ENCODE measurements at regions of chr16 and their contacts with region 1.

Region 1: GRCh38 chr16:1308977-1309885 is at the start of gene UBE2I:
- DNase-seq: peak; percentile 96 to 99 (median 98)
- H3K4me3 ChIP-seq: peak within 1 kb of the TSS; percentile 60 to 95 (median 86)
- H3K27ac ChIP-seq: peak within 1 kb of the TSS; percentile 94 to 100 (median 99)
- H3K27me3 ChIP-seq: no peaks in the 10 kb centered on the region
- CTCF ChIP-seq: peak in 5 of 56 donors; percentile 6 to 29 (median 18)
- total RNA-seq, gene UBE2I: 66.6 to 108 (median 83.6) TPM

Region 2: DNA sequence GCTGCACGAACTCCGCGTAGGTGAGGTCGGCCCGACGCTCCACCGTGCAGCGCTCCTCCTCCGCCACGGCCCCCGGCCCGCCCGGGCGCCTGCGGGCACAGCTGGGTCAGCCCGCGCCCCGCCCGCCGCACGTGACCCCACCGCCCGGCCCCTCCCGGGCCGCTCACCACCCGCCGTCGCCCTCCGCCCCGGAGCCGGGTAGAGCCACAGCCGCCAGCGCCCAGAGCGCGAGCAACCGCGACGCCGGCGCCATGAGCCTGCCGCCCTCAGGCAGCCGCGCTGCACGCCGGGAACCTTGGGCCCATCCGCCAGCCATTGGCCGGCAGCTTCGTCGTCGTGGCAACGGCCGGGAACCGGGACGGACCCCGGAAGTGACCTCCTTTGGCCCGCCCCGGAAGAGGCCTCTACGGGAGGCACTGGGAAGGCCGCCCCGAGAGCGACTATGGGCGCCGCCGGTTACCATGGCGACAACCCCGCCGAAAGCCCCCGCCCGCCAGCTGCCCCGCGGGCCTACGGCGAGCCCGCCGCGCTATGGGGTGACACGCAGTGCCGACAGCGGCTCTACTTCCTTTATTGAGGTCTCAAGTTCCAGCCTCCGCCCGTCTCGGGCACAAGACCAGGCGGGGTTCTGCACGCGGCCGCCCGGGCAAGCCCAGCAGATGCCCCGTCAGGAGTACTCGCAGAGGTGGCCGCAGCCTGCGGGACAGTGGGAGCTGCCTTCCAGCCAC is 625.0 kb before region 1 on chr16 and contains the start of gene JMJD8:
- intact Hi-C with region 1: loop called in 1 of 2 experiments (anchors 10 kb)
- DNase-seq: peak; percentile 93 to 99 (median 96)
- H3K4me3 ChIP-seq: peak within 1 kb of the TSS; percentile 10 to 93 (median 70)
- H3K27ac ChIP-seq: peak within 1 kb of the TSS in 53 of 59 donors; percentile 27 to 89 (median 77)
- H3K27me3 ChIP-seq: no peaks in the 10 kb centered on the region
- CTCF ChIP-seq: peak in 13 of 56 donors; percentile 10 to 43 (median 21)
- total RNA-seq, gene JMJD8: 19.0 to 50.5 (median 30.3) TPM

Region 3: GRCh38 chr16:1194665-1195392 is 114.4 kb before region 1 on chr16:
- intact Hi-C with region 1: no loop called
- DNase-seq: peak in 1 of 10 donors; percentile 22
- H3K4me3 ChIP-seq: peak overlapping the region in 1 of 59 donors; percentile 21
- H3K27ac ChIP-seq: no peak overlapping the region
- H3K27me3 ChIP-seq: no peaks in the 10 kb centered on the region
- CTCF ChIP-seq: peak; percentile 47 to 92 (median 79)

Region 4: GRCh38 chr16:1342526-1343427 is 33.5 kb after region 1 on chr16:
- intact Hi-C with region 1: loop called in 1 of 2 experiments (anchors 5 kb)
- DNase-seq: peak; percentile 77 to 94 (median 88)
- H3K4me3 ChIP-seq: peak overlapping the region in 52 of 59 donors; percentile 6 to 58 (median 36)
- H3K27ac ChIP-seq: peak overlapping the region in 2 of 59 donors; percentile 2 to 17
- H3K27me3 ChIP-seq: peaks cover 0 to 12% (median 0%) of the 10 kb centered on the region in 45 donors
- CTCF ChIP-seq: no peak

Region 5: DNA sequence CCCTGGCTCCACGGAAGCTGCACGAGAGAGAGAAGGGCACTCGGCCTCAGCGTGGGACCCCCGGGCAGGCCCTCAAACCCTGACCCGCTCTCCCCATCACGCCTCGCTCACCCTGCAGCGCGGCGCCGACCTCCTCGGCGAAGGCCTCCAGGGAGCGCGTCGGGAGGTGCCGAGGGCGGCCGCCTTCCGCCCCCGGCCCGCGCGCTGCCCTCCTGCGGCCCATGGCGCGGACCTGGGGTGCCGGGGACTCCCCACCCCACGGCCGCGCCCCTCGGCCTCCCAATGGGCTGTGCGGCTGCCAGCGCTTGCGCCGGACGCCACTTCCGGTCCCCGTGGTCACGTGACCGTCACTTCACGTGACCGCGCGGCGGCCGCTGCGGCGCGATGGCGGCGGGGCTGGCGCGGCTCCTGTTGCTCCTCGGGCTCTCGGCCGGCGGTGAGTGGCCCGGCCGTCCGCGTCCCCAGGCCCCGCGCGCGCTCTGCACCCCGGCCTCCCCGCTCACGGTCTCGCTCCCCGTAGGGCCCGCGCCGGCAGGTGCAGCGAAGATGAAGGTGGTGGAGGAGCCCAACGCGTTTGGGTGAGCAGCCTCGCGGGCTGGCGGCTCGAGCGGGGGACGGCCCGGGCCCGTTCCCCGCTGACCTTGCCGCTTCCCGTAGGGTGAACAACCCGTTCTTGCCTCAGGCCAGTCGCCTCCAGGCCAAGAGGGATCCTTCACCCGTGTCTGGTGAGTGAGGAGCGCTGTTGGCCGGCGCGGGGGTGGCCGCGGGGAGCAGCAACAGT is 42.5 kb after region 1 on chr16 and contains the starts of genes GNPTG and TSR3:
- intact Hi-C with region 1: loop called in 1 of 2 experiments (anchors 1 kb)
- DNase-seq: peak; percentile 38 to 91 (median 68)
- H3K4me3 ChIP-seq: peak within 1 kb of the TSS; percentile 75 to 100 (median 99)
- H3K27ac ChIP-seq: peak within 1 kb of the TSS in 54 of 59 donors; percentile 5 to 95 (median 80)
- H3K27me3 ChIP-seq: no peaks in the 10 kb centered on the region
- CTCF ChIP-seq: peak in 16 of 56 donors; percentile 5 to 55 (median 20)
- total RNA-seq, gene GNPTG: 85.9 to 151 (median 118) TPM
- total RNA-seq, gene TSR3: 30.3 to 68.2 (median 46.8) TPM

Region 6: DNA sequence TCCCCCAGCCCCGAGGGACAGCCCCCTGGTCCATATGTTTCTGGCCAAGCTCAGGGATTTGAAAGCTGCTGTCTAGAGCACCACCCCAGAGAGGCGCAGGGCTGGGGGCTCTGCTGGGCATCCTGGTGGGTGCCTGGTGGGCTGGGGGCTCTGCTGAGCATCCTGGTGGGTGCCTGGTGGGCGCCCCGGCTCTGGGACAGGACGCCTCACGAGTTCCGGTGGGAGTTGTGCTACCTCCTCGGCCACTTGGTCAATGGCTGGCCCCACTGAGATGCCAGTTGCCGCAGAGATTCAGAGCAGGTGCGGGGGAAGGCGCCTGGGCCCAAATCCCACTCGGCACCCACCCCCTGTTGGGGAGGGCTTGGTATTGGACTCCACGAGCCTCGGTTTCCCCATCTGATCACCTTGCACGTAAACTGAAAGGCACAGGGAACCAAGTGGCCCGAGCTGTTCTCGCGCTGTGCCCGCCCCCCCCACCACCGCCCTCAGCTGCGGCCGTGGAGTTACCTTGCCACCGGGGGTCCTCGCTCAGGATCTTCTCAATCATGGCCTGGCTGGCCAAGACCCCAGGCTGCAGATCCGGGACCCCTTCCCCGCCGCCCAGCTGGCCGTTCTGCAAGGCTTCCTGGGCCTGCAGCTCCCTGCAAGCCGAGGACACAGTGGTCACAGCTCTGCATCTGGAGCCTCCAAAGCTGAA is 92.0 kb after region 1 on chr16:
- intact Hi-C with region 1: loop called (anchors 5 kb)
- DNase-seq: no peak
- H3K4me3 ChIP-seq: no peak overlapping the region
- H3K27ac ChIP-seq: no peak overlapping the region
- H3K27me3 ChIP-seq: no peaks in the 10 kb centered on the region
- CTCF ChIP-seq: no peak

Region 7: GRCh38 chr16:1408171-1408837 is 99.1 kb after region 1 on chr16:
- intact Hi-C with region 1: loop called (anchors 5 kb)
- DNase-seq: peak; percentile 86 to 98 (median 95)
- H3K4me3 ChIP-seq: peak overlapping the region; percentile 41 to 89 (median 68)
- H3K27ac ChIP-seq: peak overlapping the region in 57 of 59 donors; percentile 4 to 91 (median 80)
- H3K27me3 ChIP-seq: no peaks in the 10 kb centered on the region
- CTCF ChIP-seq: peak in 3 of 56 donors; percentile 11 to 18 (median 13)

Region 8: GRCh38 chr16:1414532-1415275 is 105.5 kb after region 1 on chr16 and contains the start of gene UNKL:
- intact Hi-C with region 1: loop called (anchors 5 kb)
- DNase-seq: peak in 7 of 10 donors; percentile 43 to 71 (median 54)
- H3K4me3 ChIP-seq: peak within 1 kb of the TSS; percentile 51 to 94 (median 83)
- H3K27ac ChIP-seq: peak within 1 kb of the TSS in 56 of 59 donors; percentile 43 to 92 (median 84)
- H3K27me3 ChIP-seq: no peaks in the 10 kb centered on the region
- CTCF ChIP-seq: no peak
- total RNA-seq, gene UNKL: 25.4 to 69.9 (median 43.8) TPM

Measured in dorsolateral prefrontal cortex (tissue), 120 donors.